ENCODE measurements at regions of chr18 and their contacts with region 1.

Region 1: DNA sequence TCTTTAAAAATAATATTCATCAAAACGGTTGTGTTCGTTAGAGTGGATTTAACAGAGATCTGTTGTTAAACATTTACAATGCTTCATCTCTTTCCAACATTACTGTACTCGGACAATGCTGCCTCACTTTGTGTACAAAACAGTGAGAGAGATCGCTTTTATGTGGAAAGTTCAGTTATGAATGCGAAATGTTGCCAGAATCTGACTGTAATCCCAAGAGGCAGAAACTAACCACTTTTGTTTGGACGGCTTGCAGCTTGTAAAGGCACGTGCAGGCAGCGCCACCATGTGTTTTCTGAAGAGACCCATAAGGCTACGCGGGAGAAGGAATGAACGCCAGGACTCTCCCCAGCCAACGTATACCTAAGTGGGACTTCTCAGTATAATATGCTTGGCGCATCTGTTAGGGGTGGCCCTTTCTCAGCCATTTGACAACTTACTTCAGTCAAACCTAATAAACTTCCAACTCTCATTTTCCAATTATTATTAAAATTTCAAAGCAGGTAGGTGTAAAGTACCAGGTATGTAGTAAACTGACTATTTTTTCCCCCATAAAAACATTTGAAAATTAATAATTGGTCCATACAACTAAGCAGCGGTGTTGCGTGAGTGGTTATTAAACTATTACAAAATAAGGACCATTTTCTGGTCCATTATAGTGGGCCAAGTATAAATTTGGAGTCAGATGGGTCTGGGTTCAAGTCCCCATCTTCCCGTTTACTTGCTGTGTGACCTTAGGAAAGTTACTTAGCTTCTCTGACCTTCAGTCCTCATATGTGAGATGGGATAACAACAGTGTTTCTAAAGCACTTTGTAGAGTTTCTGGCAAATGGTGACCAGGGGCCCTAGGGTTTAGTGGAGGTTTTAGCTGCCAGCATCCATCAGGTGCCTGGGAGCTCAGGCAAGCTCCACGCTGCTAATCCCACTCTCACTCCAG is 5.6 kb upstream of the NAPG start:
- DNase-seq: peak; percentile 73
- H3K4me3 ChIP-seq: no peak overlapping the region
- H3K27ac ChIP-seq: no peak overlapping the region
- H3K4me1 ChIP-seq: peaks cover 20% of the 10 kb centered on the region
- H3K27me3 ChIP-seq: no peaks in the 10 kb centered on the region
- CTCF ChIP-seq: peak; percentile 86 to 95

Region 2: GRCh38 chr18:9965711-9966624 is 554.3 kb before region 1 on chr18:
- CTCF ChIA-PET with region 1: no interaction called
- dilution Hi-C with region 1: no loop called
- in situ Hi-C with region 1: loop called (anchors 5 to 10 kb)
- intact Hi-C with region 1: loop called (anchors 1 kb)
- DNase-seq: no peak
- H3K4me3 ChIP-seq: no peak overlapping the region
- H3K27ac ChIP-seq: no peak overlapping the region
- H3K4me1 ChIP-seq: no peaks in the 10 kb centered on the region
- H3K27me3 ChIP-seq: no peaks in the 10 kb centered on the region
- CTCF ChIP-seq: no peak

Region 3: DNA sequence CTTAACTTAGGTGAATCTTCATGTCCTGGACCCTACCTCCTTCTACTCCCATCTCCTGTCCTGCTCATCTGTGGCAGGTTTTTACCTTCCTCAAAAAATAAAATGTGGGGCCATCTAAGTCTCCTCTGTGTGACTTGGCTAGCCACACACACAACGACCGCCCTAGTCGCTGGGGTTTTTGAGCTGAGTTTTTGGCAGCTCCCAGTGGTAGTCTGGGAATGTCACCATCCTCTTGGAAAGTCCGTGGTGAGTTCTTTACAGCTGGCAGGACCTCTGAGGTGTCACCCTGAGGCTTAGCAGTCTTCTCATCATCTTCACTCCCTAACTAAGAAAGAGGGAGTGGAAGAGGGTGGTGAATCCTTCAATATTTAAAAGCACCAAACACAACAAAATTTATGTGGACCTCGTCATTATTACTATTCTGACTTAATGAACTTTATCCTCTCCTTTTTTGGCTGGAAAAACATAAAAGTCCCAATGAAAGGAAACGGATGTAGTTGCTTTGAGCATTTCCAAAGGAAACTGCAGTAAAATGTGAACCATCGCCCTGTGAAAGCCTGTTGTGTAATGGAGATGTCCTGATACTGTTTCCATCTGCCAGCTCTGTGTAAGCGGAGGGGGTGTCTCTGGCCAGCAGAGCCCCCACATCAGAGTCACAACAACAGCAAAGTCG is 527.8 kb before region 1 on chr18:
- CTCF ChIA-PET with region 1: no interaction called
- dilution Hi-C with region 1: loop called (anchors 10 kb)
- in situ Hi-C with region 1: no loop called
- intact Hi-C with region 1: no loop called
- DNase-seq: no peak
- H3K4me3 ChIP-seq: no peak overlapping the region
- H3K27ac ChIP-seq: no peak overlapping the region
- H3K4me1 ChIP-seq: no peaks in the 10 kb centered on the region
- H3K27me3 ChIP-seq: peaks cover 2% of the 10 kb centered on the region
- CTCF ChIP-seq: no peak

Region 4: GRCh38 chr18:10353791-10354190 is 166.5 kb before region 1 on chr18:
- CTCF ChIA-PET with region 1: no interaction called
- dilution Hi-C with region 1: no loop called
- in situ Hi-C with region 1: no loop called
- intact Hi-C with region 1: loop called (anchors 10 kb)
- DNase-seq: peak; percentile 68
- H3K4me3 ChIP-seq: no peak overlapping the region
- H3K27ac ChIP-seq: no peak overlapping the region
- H3K4me1 ChIP-seq: no peaks in the 10 kb centered on the region
- H3K27me3 ChIP-seq: no peaks in the 10 kb centered on the region
- CTCF ChIP-seq: no peak

Region 5: DNA sequence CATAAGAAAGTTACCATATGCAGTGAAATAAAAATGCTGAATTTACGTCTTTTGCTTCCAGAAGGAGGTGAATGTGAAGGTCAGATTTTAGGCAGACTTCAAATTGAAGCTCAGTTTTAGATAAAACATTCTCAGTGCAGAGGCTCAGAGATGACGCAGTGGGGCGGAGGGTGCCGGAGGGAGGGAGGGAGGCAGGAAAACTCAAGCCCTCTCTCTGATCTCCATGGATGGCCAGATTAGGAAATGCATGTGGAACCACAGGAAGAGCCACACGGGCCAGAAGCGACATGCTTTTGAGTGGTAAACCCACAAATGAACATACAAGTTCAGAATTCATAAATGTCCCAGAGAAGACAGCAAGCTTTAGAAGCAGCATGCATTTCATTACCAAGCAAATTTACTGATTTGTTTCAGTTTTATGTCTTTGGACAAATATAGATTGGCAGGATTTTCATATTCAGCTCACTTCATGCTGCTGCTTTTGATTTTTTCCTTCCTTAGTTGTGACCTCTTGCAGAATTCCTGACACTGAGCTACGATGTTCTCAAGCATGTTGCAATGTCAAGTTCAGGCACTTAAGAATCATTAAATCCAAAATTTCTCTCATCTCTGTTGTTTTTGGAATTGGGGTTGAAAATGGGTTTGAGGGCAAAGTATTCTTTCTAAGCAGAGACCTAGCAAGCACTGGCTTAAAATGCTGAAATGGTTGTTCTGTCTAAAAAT is 95.5 kb before region 1 on chr18:
- CTCF ChIA-PET with region 1: no interaction called
- dilution Hi-C with region 1: no loop called
- in situ Hi-C with region 1: no loop called
- intact Hi-C with region 1: no loop called
- DNase-seq: no peak
- H3K4me3 ChIP-seq: no peak overlapping the region
- H3K27ac ChIP-seq: no peak overlapping the region
- H3K4me1 ChIP-seq: peaks cover 35% of the 10 kb centered on the region
- H3K27me3 ChIP-seq: no peaks in the 10 kb centered on the region
- CTCF ChIP-seq: no peak

Region 6: GRCh38 chr18:10453806-10454673 is 66.2 kb before region 1 on chr18 and contains the start of gene APCDD1:
- CTCF ChIA-PET with region 1: no interaction called
- dilution Hi-C with region 1: no loop called
- in situ Hi-C with region 1: no loop called
- intact Hi-C with region 1: loop called (anchors 10 kb)
- DNase-seq: peak; percentile 11
- H3K4me3 ChIP-seq: peak within 1 kb of the TSS; percentile 36 to 52 (median 48)
- H3K27ac ChIP-seq: no peak within 1 kb of the TSS
- H3K4me1 ChIP-seq: peaks cover 7% of the 10 kb centered on the region
- H3K27me3 ChIP-seq: peaks cover 23% of the 10 kb centered on the region
- CTCF ChIP-seq: no peak
- total RNA-seq, gene APCDD1: 9.7 to 24.8 TPM

Measured in mammary epithelial cell (primary cell).